ENCODE measurements at regions of chr16 and their contacts with region 1.

Region 1: DNA sequence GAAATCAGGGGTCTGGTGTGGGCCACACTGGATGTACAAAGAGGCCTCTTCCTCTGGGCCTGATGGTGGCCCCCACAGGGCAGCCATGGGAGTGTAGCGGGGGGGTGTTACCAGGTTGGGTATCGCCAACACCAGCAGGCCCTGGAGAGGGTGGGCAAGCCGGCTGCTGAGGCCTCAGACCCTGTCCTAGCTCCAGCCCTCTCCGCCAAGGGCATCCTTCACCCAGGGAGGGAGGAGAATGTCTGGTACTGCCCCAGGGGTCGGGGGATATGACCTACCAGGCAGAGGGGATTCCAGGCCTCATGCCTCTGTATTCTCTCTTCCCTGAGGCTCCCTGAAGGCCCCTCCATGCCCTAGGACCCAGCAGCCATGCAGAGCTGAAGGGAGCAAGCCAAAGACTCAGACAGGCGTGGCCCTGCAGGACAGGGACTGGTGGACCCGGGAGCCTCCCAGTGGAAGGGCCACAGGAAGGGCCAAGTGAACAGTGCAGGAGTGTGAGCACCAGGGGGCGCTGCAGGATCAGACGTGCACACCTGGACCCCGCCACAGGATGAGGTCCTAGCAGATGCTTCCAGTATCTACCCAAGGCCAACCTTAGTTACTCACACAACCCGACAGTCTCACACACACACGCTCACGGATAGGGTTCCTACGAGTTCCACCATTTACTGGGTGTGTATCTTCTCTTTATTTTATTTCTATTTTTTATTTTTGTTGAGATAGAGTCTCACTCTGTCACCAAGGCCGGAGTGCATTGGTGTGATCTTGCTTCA is 10.9 kb upstream of the CES4A start:
- DNase-seq: peak; percentile 79 to 95 (median 87)
- ATAC-seq: peak; percentile 99
- H3K4me3 ChIP-seq: no peak overlapping the region
- H3K4me3 Mint-ChIP-seq: no peak overlapping the region
- H3K27ac ChIP-seq: no peak overlapping the region
- H3K27ac Mint-ChIP-seq: no peak overlapping the region
- H3K4me1 ChIP-seq: peaks cover 23% of the 10 kb centered on the region
- H3K4me1 Mint-ChIP-seq: peaks cover 5% of the 10 kb centered on the region
- H3K27me3 ChIP-seq: no peaks in the 10 kb centered on the region
- H3K27me3 Mint-ChIP-seq: peaks cover 3% of the 10 kb centered on the region
- CTCF ChIP-seq: peak; percentile 91

Region 2: GRCh38 chr16:67100569-67101310 is 123.2 kb after region 1 on chr16:
- CTCF ChIA-PET with region 1: interaction called, 3 read pairs
- POLR2A ChIA-PET with region 1: no interaction called
- intact Hi-C with region 1: loop called (anchors 1 kb)
- DNase-seq: peak in 3 of 14 experiments; percentile 48 to 54 (median 48)
- ATAC-seq: no peak
- H3K4me3 ChIP-seq: no peak overlapping the region
- H3K4me3 Mint-ChIP-seq: no peak overlapping the region
- H3K27ac ChIP-seq: no peak overlapping the region
- H3K27ac Mint-ChIP-seq: no peak overlapping the region
- H3K4me1 ChIP-seq: no peaks in the 10 kb centered on the region
- H3K4me1 Mint-ChIP-seq: no peaks in the 10 kb centered on the region
- H3K27me3 ChIP-seq: no peaks in the 10 kb centered on the region
- H3K27me3 Mint-ChIP-seq: no peaks in the 10 kb centered on the region
- CTCF ChIP-seq: peak; percentile 38

Region 3: DNA sequence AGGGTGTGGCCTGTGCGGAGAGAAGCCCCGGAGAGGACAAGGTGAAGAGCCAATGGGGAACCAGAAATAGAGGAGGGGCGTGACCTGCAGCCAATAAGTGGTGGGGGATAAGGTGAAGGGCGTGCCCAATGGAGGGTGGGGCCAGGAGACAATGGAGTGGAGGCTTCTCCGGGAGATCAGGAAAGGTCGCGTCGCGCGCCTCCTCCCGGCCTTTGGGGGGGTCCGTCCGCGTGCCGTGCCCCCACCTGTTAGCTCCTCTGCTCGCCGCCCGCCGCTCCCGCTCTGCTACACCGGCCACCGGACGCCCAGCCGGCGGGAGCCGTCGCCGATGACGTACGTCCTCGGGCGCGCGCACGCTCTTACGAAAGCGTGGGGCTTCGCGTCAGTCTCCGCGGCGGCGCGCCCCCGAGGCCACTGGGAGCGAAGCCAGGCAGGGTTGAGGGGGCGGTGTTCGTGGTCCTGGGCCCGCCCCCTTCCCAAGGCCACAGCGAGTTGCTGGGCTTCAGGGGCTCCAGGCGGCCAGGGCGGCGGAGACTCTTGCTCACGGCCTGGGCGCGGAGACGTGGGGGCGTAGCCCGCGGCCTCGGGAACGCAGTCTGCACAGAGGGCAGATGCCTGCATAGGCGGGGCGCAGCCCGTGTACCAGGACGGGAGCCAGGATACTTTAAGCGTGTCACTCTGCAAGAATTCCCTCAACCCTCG is 206.3 kb after region 1 on chr16 and contains the start of gene MATCAP1:
- CTCF ChIA-PET with region 1: interaction called, 3 read pairs
- POLR2A ChIA-PET with region 1: no interaction called
- intact Hi-C with region 1: loop called (anchors 1 kb)
- DNase-seq: peak; percentile 83 to 98 (median 89)
- ATAC-seq: peak; percentile 94
- H3K4me3 ChIP-seq: peak within 1 kb of the TSS; percentile 86
- H3K4me3 Mint-ChIP-seq: peak within 1 kb of the TSS; percentile 94
- H3K27ac ChIP-seq: peak within 1 kb of the TSS; percentile 87 to 89
- H3K27ac Mint-ChIP-seq: peak within 1 kb of the TSS; percentile 90
- H3K4me1 ChIP-seq: peaks cover 27% of the 10 kb centered on the region
- H3K4me1 Mint-ChIP-seq: peaks cover 16% of the 10 kb centered on the region
- H3K27me3 ChIP-seq: peaks cover 0 to 6% of the 10 kb centered on the region in 2 experiments
- H3K27me3 Mint-ChIP-seq: peaks cover 4% of the 10 kb centered on the region
- CTCF ChIP-seq: no peak
- total RNA-seq, gene MATCAP1: 9.7 to 10.6 TPM

Region 4: DNA sequence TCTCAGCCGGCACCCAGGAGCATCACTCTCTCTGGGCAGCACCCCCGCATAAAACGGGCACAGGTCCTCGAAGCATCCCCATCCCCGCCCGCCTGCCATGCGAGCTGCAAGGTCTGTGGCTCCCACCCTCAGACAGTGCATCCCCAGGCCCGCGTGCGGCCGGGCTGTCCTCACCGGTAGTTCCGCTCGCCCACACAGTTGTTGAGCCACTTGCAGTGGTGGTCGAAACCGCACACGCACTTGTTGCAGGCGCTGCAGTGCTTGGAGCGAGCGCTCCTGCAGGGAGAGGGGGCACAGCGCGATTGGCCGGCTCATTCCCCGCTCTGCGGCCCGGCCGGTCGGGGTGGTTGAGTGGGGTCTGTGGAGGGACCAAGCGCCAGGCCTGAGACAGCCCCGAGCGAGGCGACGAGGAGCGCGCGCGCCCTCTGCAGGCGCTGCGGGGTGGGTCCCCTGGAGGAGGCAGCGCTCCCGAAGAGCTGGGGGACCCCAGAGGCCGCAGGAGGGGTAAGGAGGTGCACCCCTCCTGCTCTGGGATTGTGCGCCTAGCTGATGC is 421.7 kb after region 1 on chr16:
- CTCF ChIA-PET with region 1: no interaction called
- POLR2A ChIA-PET with region 1: no interaction called
- intact Hi-C with region 1: loop called in 1 of 2 experiments (anchors 5 kb)
- DNase-seq: peak in 10 of 14 experiments; percentile 22 to 68 (median 30)
- ATAC-seq: peak; percentile 70
- H3K4me3 ChIP-seq: no peak overlapping the region
- H3K4me3 Mint-ChIP-seq: no peak overlapping the region
- H3K27ac ChIP-seq: no peak overlapping the region
- H3K27ac Mint-ChIP-seq: no peak overlapping the region
- H3K4me1 ChIP-seq: peaks cover 16% of the 10 kb centered on the region
- H3K4me1 Mint-ChIP-seq: peaks cover 2% of the 10 kb centered on the region
- H3K27me3 ChIP-seq: peaks cover 22 to 24% of the 10 kb centered on the region in 2 experiments
- H3K27me3 Mint-ChIP-seq: peaks cover 27% of the 10 kb centered on the region
- CTCF ChIP-seq: peak; percentile 57

Region 5: GRCh38 chr16:67415872-67416793 is 438.6 kb after region 1 on chr16 and contains the start of gene ZDHHC1:
- CTCF ChIA-PET with region 1: no interaction called
- POLR2A ChIA-PET with region 1: no interaction called
- intact Hi-C with region 1: loop called (anchors 5 to 10 kb)
- DNase-seq: peak in 9 of 14 experiments; percentile 11 to 65 (median 45)
- ATAC-seq: peak; percentile 80
- H3K4me3 ChIP-seq: peak within 1 kb of the TSS; percentile 32
- H3K4me3 Mint-ChIP-seq: peak within 1 kb of the TSS; percentile 66
- H3K27ac ChIP-seq: no peak within 1 kb of the TSS
- H3K27ac Mint-ChIP-seq: no peak within 1 kb of the TSS
- H3K4me1 ChIP-seq: peaks cover 12% of the 10 kb centered on the region
- H3K4me1 Mint-ChIP-seq: peaks cover 4% of the 10 kb centered on the region
- H3K27me3 ChIP-seq: peaks cover 20 to 27% of the 10 kb centered on the region in 2 experiments
- H3K27me3 Mint-ChIP-seq: peaks cover 43% of the 10 kb centered on the region
- CTCF ChIP-seq: peak; percentile 57
- total RNA-seq, gene ZDHHC1: 0.22 TPM in 1 of 2 experiments, not detected in the other

Region 6: GRCh38 chr16:67470359-67470758 is 492.8 kb after region 1 on chr16:
- CTCF ChIA-PET with region 1: no interaction called
- POLR2A ChIA-PET with region 1: no interaction called
- intact Hi-C with region 1: loop called in 1 of 2 experiments (anchors 5 kb)
- DNase-seq: no peak
- ATAC-seq: no peak
- H3K4me3 ChIP-seq: no peak overlapping the region
- H3K4me3 Mint-ChIP-seq: no peak overlapping the region
- H3K27ac ChIP-seq: no peak overlapping the region
- H3K27ac Mint-ChIP-seq: no peak overlapping the region
- H3K4me1 ChIP-seq: peaks cover 28% of the 10 kb centered on the region
- H3K4me1 Mint-ChIP-seq: peaks cover 53% of the 10 kb centered on the region
- H3K27me3 ChIP-seq: no peaks in the 10 kb centered on the region
- H3K27me3 Mint-ChIP-seq: no peaks in the 10 kb centered on the region
- CTCF ChIP-seq: no peak

Measured in CD4-positive, alpha-beta T cell (primary cell).